Left lung (tissue), 14 donors: ENCODE measurements at regions of chr1 and their contacts with region 1.

Region 1: GRCh38 chr1:119367427-119368124 is 1.0 kb upstream of the HAO2 start:
- DNase-seq: peak in 2 of 4 donors; percentile 38 to 42
- ATAC-seq: peak; percentile 68
- H3K4me3 ChIP-seq: no peak overlapping the region
- H3K27ac ChIP-seq: no peak overlapping the region
- H3K4me1 ChIP-seq: no peaks in the 10 kb centered on the region
- H3K27me3 ChIP-seq: no peaks in the 10 kb centered on the region
- CTCF ChIP-seq: peak in 1 of 2 donors; percentile 66

Region 2: DNA sequence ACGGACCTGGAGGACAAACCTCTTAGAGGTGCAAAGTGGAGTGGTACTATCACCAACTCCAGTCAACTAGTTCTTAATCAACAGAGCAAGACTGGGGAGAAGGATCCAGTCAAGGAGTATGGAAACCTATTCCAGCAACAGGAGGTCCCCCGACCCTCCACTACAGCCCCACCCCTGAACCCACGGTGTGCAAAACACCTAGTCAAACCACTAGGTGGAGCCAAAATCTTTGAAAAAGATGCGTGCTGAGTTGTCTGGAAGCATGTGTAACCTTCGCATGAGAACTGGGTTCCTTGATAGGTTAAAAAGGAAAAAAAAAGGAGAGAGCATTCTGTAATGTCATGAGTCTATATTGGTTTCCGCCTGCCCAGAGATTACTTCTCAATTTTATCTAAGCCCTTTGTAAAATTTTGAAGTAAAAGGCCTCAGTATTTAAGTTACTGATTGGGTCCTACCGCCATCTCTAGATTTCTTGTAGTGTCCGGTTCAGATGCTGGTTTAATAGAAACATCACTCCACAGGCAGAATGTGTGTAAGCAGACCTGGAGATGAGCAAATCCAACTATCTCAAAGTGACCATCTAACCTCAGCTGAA is 80.9 kb before region 1 on chr1:
- intact Hi-C with region 1: loop called in 1 of 2 experiments (anchors 10 kb)
- DNase-seq: peak in 1 of 4 donors; percentile 36
- ATAC-seq: peak; percentile 78
- H3K4me3 ChIP-seq: no peak overlapping the region
- H3K27ac ChIP-seq: no peak overlapping the region
- H3K4me1 ChIP-seq: no peaks in the 10 kb centered on the region
- H3K27me3 ChIP-seq: no peaks in the 10 kb centered on the region
- CTCF ChIP-seq: peak; percentile 31 to 32

Region 3: GRCh38 chr1:119435052-119435451 is 67.5 kb after region 1 on chr1:
- intact Hi-C with region 1: no loop called
- DNase-seq: no peak
- ATAC-seq: no peak
- H3K4me3 ChIP-seq: no peak overlapping the region
- H3K27ac ChIP-seq: no peak overlapping the region
- H3K4me1 ChIP-seq: no peaks in the 10 kb centered on the region
- H3K27me3 ChIP-seq: no peaks in the 10 kb centered on the region
- CTCF ChIP-seq: no peak

Region 4: DNA sequence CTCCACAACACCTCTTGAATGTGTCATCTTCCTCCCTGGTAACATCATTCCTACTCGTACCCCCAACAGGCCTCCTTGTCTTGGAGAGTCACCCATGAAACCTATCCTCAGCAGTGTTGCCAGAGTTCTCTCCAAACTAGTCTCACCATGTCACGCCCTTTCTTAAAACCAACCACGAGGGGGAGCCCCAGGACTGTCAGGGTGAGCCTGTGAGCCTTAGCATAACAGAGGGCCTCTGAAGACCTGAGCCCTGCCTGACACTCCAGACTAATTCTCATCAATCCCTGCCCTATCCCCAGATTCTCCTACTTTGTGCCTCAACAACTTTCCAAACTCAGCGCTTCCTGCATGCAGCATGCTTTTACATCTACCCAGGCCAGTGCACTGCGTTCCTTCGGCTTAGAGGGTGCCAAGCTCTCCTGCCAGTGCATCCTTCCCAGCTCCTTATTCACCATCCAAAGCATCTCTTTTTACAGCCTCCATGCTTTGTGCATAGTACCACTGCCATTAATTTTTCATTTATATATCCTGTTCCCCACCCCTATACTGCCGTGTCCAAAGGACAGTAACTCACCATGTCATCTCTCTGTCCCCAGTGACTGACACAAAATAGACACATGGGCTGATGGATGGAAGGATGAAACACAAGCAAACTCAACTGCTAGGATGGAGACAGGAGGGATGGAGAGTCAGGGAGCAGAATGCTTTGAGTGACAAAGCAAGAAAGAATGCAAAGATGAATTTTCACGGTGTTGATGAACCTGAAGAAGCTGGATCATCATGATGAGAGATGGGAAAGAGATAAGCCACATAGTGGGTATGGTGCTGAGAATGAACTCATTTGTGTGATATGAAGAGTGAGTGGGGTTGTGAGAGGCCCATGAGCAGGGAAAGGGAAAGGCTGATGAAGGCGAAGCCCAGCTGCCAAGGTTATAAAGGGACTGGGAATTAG is 246.5 kb after region 1 on chr1:
- intact Hi-C with region 1: no loop called
- DNase-seq: peak; percentile 76 to 93 (median 83)
- ATAC-seq: peak; percentile 93
- H3K4me3 ChIP-seq: no peak overlapping the region
- H3K27ac ChIP-seq: no peak overlapping the region
- H3K4me1 ChIP-seq: peaks cover 4 to 5% of the 10 kb centered on the region in 2 donors
- H3K27me3 ChIP-seq: no peaks in the 10 kb centered on the region
- CTCF ChIP-seq: peak; percentile 70 to 73

Region 5: DNA sequence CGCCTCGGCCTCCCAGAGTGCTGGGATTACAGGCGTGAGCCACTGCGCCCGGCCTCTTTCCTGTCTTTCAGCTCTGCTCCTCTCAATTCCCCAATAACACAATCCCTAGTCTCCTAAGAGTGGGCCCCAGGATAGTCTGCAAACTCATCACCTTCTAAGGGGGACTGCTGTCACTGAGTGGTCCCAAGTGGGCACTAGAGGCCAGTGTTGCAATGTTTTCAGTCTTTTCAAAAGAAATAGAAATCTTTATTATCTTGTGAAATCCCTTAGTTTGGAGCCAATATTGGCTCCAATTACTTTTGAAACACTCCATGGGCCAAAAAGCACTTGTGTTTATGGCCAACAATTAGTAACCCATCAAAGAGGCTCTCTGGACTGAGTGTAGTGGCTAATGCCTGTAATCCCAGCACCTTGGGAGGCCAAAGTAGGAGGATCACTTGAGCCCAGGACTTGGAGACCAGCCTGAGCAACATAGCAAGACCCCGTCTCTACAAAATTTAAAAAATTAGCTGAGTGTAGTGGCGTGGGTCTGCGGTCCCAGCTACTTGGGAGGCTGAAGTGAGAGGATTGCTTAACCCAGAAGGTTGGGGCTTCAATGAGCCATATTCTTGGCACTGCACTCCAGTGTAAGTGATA is 309.1 kb after region 1 on chr1:
- intact Hi-C with region 1: no loop called
- DNase-seq: peak in 2 of 4 donors; percentile 74 to 84
- ATAC-seq: peak; percentile 23
- H3K4me3 ChIP-seq: no peak overlapping the region
- H3K27ac ChIP-seq: peak overlapping the region in 1 of 2 donors; percentile 33
- H3K4me1 ChIP-seq: peaks cover 6 to 13% of the 10 kb centered on the region in 2 donors
- H3K27me3 ChIP-seq: no peaks in the 10 kb centered on the region
- CTCF ChIP-seq: no peak